Activated T-helper 2 cell treated with anti-CD3 and anti-CD28 coated beads, Interferon-gamma antibody, Interleukin-2, Interleukin-4, amounts not matched to agents 10 μg/mL and 5 μg/mL and 100 μg/mL, durations not matched to agents 14 hours and 24 hours and 36 hours (primary cell): ENCODE measurements at regions of chr4 and their contacts with region 1.

Region 1: DNA sequence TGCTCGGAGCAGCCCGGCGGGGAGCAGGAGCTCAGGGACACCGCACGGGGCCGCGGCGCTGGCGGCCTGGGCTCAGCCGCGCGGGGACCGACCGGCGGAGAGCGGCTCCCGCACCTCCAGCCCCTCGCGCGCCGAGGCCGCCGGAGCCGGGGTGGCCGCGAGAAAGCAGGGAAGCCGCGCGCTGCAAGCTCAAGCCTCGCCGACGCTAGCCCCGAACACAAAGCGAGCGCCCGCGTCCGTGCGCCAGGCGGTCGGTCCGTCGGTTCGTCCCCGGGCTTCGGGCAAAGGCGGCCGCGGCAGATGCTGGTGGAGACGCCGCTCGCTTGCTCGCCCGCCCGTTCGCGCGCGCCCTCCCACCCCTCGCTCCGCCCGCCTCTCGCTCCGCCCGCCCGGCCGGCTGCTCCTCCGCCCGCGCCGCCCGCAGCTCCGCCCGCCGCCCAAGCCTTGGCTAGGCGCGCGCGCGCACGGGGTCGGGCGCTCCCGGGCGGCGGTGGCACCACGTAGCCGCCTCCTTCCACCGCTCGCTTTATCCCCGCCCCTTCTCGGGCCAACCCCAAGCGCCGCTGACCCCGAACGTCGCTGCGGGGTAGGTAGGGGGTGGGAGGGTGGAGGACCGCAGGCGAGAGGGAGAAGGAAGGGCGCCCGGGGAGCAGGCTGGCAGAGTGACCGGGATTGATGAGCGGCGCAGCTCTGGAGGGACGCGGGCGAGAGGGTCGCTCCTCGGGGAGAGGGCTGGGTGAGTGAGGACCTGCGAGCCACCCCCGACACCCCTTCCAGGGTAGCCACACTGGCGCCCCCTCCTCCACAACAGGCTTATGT is at the start of gene TSPAN5:
- DNase-seq: peak; percentile 75
- H3K4me3 Mint-ChIP-seq: peak within 1 kb of the TSS; percentile 100
- H3K27ac Mint-ChIP-seq: peak within 1 kb of the TSS; percentile 94
- H3K4me1 Mint-ChIP-seq: peaks cover 73% of the 10 kb centered on the region
- H3K27me3 Mint-ChIP-seq: no peaks in the 10 kb centered on the region
- total RNA-seq, gene TSPAN5: 21.1 and 24.4 TPM in 2 replicates

Region 2: GRCh38 chr4:98260579-98261290 is 397.8 kb before region 1 on chr4:
- intact Hi-C with region 1: loop called (anchors 2 kb)
- DNase-seq: peak; percentile 89
- H3K4me3 Mint-ChIP-seq: peak overlapping the region; percentile 95
- H3K27ac Mint-ChIP-seq: peak overlapping the region; percentile 98
- H3K4me1 Mint-ChIP-seq: peaks cover 44% of the 10 kb centered on the region
- H3K27me3 Mint-ChIP-seq: no peaks in the 10 kb centered on the region

Region 3: DNA sequence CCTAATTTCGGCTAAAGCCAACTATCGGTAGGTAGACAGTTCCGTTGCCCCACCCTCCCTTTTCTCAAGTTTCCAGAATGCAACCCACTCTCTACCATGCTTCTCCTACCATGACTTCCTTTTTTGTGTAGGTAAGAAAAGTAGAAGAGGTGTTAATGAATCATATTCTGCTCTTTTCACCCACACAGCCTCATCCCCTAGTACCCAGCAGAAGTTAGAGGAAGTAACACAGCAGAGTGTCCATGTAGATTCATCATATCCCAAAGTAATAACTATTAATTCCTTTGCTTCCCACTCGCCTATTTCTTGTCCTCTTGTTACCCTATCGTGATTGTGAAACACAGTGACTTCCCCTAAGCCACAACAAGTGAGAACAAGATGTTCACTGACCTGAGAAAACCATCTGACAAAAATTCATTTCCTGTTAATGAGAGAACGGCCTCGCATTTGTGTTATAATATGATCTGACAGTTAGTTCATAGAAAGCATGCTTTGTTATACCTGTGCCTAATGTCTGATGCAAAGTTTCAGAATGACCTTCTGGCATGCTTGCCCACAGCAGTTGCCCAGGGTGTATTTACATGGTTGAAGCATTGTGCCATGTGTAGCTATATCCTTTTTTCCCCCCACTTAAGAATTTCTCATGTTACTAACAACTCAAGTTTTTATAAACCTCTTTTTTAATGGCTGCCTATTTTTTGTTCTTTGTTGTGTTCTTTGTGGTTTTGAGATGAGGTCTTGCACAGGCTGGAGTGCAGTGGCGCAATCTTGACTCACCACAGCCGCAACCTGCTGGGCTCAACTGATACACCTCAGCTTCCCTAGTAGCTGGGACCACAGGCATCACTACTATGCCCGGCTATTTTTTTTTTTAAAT is 211.8 kb before region 1 on chr4:
- intact Hi-C with region 1: loop called (anchors 2 kb)
- DNase-seq: peak; percentile 60
- H3K4me3 Mint-ChIP-seq: peak overlapping the region; percentile 63
- H3K27ac Mint-ChIP-seq: peak overlapping the region; percentile 92
- H3K4me1 Mint-ChIP-seq: peaks cover 42% of the 10 kb centered on the region
- H3K27me3 Mint-ChIP-seq: no peaks in the 10 kb centered on the region

Region 4: GRCh38 chr4:98601708-98602107 is 56.8 kb before region 1 on chr4:
- intact Hi-C with region 1: loop called (anchors 1 kb)
- DNase-seq: no peak
- H3K4me3 Mint-ChIP-seq: peak overlapping the region; percentile 60
- H3K27ac Mint-ChIP-seq: peak overlapping the region; percentile 93
- H3K4me1 Mint-ChIP-seq: peaks cover 51% of the 10 kb centered on the region
- H3K27me3 Mint-ChIP-seq: no peaks in the 10 kb centered on the region

Region 5: DNA sequence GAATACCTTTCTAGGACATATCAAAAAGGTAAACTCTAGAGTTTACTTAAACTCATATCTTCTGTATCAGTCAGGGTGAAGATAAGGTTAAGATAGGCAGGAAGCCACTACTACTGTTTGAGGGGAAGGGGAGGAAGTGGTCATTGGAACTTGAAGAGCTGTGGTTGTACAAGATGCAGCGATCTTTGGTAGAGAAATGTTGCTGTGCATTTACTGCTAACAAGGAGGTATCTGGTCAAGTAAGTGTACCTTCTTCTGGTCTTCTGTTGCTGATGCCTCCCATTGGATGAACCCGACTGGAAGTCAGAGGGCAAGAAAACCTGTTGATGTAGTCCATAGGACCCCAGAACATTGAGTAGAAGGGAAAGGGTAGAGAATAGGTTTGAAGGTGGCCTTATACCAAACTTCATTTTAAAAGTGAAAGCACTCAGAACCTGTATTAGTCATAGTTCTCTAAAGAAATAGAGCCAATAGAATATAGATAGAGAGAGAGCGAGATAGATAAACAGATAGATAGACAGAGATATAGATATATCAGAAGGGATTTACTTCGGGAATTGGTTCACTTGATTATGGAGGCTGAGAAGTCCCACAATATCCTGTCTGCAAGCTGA is 47.8 kb after region 1 on chr4:
- intact Hi-C with region 1: loop called (anchors 2 kb)
- DNase-seq: peak; percentile 53
- H3K4me3 Mint-ChIP-seq: peak overlapping the region; percentile 67
- H3K27ac Mint-ChIP-seq: peak overlapping the region; percentile 87
- H3K4me1 Mint-ChIP-seq: peaks cover 26% of the 10 kb centered on the region
- H3K27me3 Mint-ChIP-seq: no peaks in the 10 kb centered on the region

Region 6: DNA sequence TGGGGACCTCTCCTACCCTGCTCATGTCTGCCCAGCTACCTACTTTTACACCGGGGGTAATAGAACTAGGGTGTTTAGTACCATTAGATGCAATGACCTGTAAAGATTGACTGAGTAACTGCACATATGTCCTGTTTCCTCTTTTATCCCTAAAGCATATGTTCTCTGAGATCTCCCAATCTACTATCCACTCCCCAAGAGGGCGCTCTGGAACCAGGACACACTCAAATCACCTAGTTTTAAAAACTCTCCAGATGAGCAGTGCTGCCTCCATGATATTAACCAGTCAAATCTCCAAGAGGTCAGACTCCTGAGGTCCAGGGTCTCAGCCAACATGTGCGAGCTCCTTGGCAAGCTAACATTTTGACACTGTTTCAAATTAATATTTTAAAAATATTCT is 86.9 kb after region 1 on chr4:
- intact Hi-C with region 1: no loop called
- DNase-seq: no peak
- H3K4me3 Mint-ChIP-seq: no peak overlapping the region
- H3K27ac Mint-ChIP-seq: no peak overlapping the region
- H3K4me1 Mint-ChIP-seq: peaks cover 6% of the 10 kb centered on the region
- H3K27me3 Mint-ChIP-seq: no peaks in the 10 kb centered on the region

Region 7: DNA sequence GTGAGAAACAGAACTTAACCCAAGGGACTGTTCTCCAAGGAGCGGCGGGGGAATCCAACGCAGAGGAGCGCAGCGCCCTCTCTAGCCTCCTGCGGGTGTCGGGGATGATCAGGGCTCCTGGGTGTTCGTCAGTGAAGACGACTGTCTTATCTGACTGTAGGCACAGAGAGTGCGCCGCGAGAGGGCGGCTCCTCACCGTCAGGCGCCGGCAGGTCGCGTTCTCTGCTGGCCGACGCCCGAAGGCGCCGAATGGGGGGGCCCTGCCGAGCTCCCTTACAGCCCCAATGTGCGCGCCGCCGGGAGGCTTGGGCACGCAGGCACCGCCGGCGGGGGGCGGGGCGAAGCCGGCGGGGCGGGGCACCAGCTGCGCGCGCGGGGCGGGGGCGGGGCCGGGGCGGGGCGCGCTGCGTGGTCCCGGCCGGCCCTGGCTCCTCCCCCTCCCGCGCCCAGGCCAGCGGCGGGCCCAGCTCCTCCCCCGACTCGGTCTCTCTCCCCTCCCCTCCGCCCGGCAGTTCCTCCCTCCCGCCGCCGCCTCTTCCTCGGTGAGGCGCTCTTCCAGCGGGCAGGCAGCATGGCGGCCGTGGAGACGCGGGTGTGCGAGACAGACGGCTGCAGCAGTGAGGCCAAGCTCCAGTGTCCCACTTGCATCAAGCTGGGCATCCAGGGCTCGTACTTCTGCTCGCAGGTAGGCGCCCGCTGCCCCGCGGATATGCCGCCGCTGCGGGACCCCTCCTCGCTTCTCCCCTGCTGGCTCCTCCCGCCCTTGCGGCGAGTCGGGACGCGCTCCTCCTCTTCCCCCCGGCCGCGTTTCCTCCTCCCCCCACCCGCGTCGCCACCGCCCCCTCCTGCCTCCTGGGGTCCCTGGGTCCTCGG is 336.9 kb after region 1 on chr4 and contains the start of gene METAP1:
- intact Hi-C with region 1: loop called (anchors 2 kb)
- DNase-seq: peak; percentile 94
- H3K4me3 Mint-ChIP-seq: peak within 1 kb of the TSS; percentile 91
- H3K27ac Mint-ChIP-seq: peak within 1 kb of the TSS; percentile 99
- H3K4me1 Mint-ChIP-seq: peaks cover 26% of the 10 kb centered on the region
- H3K27me3 Mint-ChIP-seq: no peaks in the 10 kb centered on the region
- total RNA-seq, gene METAP1: 58.2 and 58.7 TPM in 2 replicates

Region 8: DNA sequence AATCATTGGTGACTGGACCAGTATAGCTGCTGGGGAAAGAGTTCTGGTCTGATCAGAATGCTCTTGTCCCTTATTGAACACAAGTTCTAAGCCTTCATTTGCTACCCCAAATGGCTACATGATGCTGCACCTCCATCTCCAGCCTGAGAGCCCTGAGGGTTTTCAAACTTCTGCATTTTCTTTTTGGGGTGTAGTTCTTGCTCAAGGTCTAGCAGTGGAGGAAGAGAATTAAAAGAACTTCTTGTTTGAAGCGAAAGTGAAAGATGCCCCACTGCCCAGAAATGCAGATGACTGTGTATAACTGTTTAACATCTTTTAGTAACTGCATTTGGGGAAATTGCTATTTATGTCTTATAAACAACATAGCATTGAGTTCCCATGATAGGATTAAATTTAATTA is 1197.2 kb after region 1 on chr4:
- intact Hi-C with region 1: loop called (anchors 10 kb)
- DNase-seq: no peak
- H3K4me3 Mint-ChIP-seq: peak overlapping the region; percentile 3
- H3K27ac Mint-ChIP-seq: peak overlapping the region; percentile 83
- H3K4me1 Mint-ChIP-seq: peaks cover 68% of the 10 kb centered on the region
- H3K27me3 Mint-ChIP-seq: no peaks in the 10 kb centered on the region